ENCODE measurements at regions of chrX and their contacts with region 1.

Region 1: DNA sequence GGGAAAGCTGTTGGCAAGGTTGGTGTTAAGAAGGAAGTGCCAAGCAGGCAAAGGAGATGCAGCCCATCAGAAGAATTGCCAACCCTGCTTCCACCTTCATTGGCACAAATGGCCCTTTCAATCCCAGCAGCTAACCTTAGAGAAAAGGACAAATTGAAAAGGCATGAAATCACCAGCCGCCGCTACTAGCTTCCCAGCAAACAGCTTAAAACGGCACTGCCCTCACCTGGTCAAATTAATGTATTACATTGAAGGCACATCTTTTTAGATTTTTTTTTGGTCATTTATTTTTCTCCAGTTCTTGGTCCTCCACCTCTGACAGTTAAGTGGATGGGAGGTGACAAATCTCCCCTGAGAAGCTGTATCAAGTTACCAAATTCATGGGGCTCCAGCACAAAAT is 51.0 kb upstream of the NHSL2 start:
- DNase-seq: peak; percentile 36
- H3K4me3 ChIP-seq: no peak overlapping the region
- H3K27ac ChIP-seq: no peak overlapping the region
- H3K4me1 ChIP-seq: no peaks in the 10 kb centered on the region
- H3K27me3 ChIP-seq: peaks cover 1% of the 10 kb centered on the region
- CTCF ChIP-seq: peak; percentile 54 to 61

Region 2: DNA sequence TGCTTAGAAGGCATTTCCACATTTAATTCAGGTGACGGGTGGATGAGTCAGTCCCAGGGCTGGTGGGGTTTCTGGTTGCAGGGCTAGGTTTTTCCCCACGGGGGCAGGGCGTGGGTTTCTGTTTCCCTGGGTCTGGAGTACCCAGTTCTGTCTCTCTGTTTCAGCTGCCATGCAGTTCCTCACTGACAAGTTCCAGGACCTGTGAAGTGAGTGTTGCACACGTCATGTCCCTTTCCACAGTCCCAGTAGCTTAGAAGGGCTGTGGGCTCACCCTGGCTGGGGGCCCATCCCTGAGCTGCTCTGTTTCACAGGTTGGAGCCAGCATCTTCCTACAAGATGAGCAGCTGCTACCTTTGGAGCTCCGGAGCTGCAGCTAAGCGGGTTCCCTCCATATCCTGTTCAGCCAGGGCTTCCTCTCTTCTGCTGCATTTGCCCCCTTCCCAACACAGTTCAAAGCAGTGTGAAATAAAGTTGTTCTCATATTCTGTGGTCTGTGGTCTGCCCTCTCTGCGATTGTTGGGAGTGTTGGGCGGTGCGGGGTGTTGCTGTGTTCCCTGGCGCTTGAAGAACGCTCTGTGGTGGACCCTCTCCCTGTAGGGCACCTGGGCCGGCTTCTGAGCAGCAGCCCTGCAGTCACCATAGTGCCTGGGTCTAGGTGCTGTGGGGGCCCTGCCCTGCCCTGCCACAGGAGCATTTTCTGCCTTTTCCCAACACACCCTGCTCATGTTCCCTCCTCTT is 188.4 kb before region 1 on chrX:
- CTCF ChIA-PET with region 1: interaction called, 3 read pairs
- dilution Hi-C with region 1: no loop called
- in situ Hi-C with region 1: no loop called
- intact Hi-C with region 1: loop called (anchors 1 kb)
- DNase-seq: peak; percentile 70
- H3K4me3 ChIP-seq: no peak overlapping the region
- H3K27ac ChIP-seq: no peak overlapping the region
- H3K4me1 ChIP-seq: no peaks in the 10 kb centered on the region
- H3K27me3 ChIP-seq: no peaks in the 10 kb centered on the region
- CTCF ChIP-seq: no peak

Region 3: GRCh38 chrX:71895607-71896006 is 36.0 kb after region 1 on chrX:
- CTCF ChIA-PET with region 1: no interaction called
- dilution Hi-C with region 1: no loop called
- in situ Hi-C with region 1: no loop called
- intact Hi-C with region 1: no loop called
- DNase-seq: no peak
- H3K4me3 ChIP-seq: no peak overlapping the region
- H3K27ac ChIP-seq: no peak overlapping the region
- H3K4me1 ChIP-seq: no peaks in the 10 kb centered on the region
- H3K27me3 ChIP-seq: peaks cover 1% of the 10 kb centered on the region
- CTCF ChIP-seq: no peak

Region 4: DNA sequence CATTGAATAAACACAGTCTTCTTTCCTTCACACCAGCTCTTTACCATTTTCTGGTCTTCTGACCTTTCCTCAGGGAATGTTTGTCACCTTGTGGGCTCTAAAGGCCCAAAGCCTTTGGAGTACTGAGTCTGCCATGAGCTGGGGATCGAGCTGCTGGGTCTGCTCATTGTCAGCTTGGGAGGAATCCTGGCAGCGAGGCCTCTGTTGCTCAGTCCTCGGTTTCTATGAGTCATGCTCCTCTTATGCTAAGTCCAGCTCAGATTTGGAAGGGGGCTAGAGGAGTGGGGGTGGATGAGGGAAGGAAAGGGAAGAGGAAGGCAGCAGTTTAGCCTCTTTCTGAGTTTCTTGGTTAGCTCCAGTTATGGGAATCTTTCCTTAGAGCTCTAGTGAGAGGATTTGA is 82.1 kb after region 1 on chrX:
- CTCF ChIA-PET with region 1: no interaction called
- dilution Hi-C with region 1: no loop called
- in situ Hi-C with region 1: no loop called
- intact Hi-C with region 1: no loop called
- DNase-seq: no peak
- H3K4me3 ChIP-seq: no peak overlapping the region
- H3K27ac ChIP-seq: no peak overlapping the region
- H3K4me1 ChIP-seq: no peaks in the 10 kb centered on the region
- H3K27me3 ChIP-seq: peaks cover 10% of the 10 kb centered on the region
- CTCF ChIP-seq: no peak

Measured in mammary epithelial cell (primary cell).